ENCODE measurements at regions of chr7 and their contacts with region 1.

Region 1: GRCh38 chr7:74183613-74184450 is 9.7 kb downstream of the EIF4H start:
- DNase-seq: no peak
- ATAC-seq: peak; percentile 19

Region 2: GRCh38 chr7:73918926-73919693 is 264.7 kb before region 1 on chr7:
- intact Hi-C with region 1: no loop called
- DNase-seq: no peak
- ATAC-seq: no peak

Region 3: GRCh38 chr7:74164985-74165456 is 18.8 kb before region 1 on chr7:
- intact Hi-C with region 1: no loop called
- DNase-seq: no peak
- ATAC-seq: peak; percentile 43

Region 4: DNA sequence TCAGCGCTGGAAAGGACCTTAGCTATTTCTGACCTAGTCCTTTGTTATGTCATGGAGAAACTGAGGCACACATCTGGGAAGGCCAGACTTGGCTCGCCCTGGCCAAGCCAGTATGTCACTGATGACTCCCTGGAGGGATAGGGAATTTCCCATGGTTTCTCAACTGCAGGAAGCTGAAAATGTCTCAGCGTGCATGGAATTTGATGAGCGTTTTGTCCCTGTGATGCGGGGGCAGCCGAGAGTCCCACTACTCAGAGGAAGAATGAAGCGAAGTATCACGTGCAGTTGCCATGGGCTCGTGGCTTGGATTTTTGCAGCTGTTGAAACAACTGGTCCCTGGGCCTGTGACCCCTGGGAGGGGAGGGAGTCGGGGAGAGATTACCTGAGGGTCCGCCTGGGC is 150.2 kb after region 1 on chr7:
- intact Hi-C with region 1: no loop called
- DNase-seq: no peak
- ATAC-seq: no peak

Region 5: GRCh38 chr7:74722153-74722552 is 538.3 kb after region 1 on chr7:
- intact Hi-C with region 1: loop called (anchors 5 kb)
- DNase-seq: no peak
- ATAC-seq: no peak

Measured in left ventricle myocardium superior (tissue), 1 donor.